Activated T-helper 1 cell treated with anti-CD3 and anti-CD28 coated beads, Interleukin-12 subunit alpha, Interleukin-12 subunit beta, Interleukin-2, Interleukin-4 antibody, amounts not matched to agents 30 ng/mL and 10 ng/mL and 1 ng/mL, durations not matched to agents 14 hours and 24 hours and 36 hours (primary cell): ENCODE measurements at regions of chr6 and their contacts with region 1.

Region 1: GRCh38 chr6:105492706-105493673 is 90.1 kb upstream of the PREP start:
- DNase-seq: no peak
- H3K4me3 Mint-ChIP-seq: peak overlapping the region; percentile 21
- H3K27ac Mint-ChIP-seq: peak overlapping the region; percentile 78
- H3K4me1 Mint-ChIP-seq: peaks cover 26% of the 10 kb centered on the region
- H3K27me3 Mint-ChIP-seq: no peaks in the 10 kb centered on the region

Region 2: DNA sequence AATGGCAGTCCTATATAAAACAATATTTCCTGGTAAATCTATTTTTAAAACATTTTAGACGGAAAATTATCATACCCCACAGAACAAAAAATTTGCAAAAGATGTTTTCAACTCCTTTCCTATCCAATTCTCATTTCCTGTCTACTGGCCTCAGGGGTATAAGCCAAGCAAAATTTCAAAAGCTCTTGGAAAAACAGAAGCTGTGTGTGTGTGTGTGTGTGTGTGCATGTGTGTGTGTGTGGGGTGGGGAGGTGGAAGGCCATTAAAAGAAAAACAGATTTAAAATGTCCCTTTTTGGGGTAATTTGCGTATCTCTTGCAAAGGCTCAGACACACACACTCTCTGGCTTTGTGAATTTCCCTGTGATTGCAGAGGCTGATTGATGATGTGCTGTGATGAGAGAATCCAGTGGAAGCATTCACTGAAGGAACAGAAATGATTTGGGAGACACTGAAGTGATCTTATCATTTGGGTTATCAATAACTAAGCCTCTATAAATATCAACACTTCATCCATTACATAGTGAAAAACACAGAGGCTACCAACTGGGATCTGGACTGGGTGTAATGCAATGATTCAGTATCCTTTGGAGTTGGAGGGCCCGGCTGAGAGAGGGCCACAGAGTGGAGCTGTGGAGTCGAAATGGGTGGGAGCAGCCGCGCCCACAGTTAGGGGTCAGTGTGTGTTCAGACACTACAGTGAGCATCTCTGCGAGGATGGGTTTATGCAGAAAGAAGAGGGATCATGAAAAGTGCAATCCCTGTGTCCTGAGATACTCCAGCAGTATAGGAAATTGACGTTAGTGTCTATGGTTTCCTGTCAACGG is 16.7 kb after region 1 on chr6:
- intact Hi-C with region 1: loop called (anchors 1 kb)
- DNase-seq: no peak
- H3K4me3 Mint-ChIP-seq: no peak overlapping the region
- H3K27ac Mint-ChIP-seq: peak overlapping the region; percentile 1
- H3K4me1 Mint-ChIP-seq: peaks cover 32% of the 10 kb centered on the region
- H3K27me3 Mint-ChIP-seq: peaks cover 27% of the 10 kb centered on the region

Region 3: DNA sequence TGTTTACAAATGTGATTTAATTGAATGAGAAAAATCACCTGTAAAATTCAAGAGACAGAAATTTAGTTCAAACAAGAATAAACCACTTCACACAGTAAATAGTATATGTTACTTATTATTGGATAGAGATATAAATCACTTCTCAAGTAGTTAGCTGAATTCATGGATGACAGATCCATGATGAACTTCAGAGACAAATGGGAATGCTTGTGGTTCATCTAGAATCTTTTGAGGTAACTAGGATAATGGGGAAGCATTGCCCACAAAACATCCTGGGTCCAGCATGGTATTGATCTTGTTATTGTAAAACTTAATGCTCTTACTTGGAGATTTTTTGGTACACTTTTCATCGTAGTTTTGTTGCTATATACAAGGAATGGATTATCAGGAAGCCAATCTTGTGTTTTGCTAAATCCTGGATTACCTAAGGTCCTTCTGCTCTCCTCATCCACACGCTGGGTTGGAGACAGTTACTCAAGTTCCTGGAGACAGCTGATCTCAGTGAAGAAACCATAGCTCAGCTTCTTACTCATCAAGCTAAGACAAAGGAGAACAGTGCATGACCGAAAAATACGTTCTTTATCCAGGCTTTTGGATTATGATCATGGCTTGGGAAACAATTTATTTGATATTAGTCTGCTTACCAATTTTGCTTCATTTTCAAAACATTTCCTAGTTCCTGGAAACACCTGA is 52.4 kb after region 1 on chr6:
- intact Hi-C with region 1: no loop called
- DNase-seq: no peak
- H3K4me3 Mint-ChIP-seq: no peak overlapping the region
- H3K27ac Mint-ChIP-seq: no peak overlapping the region
- H3K4me1 Mint-ChIP-seq: no peaks in the 10 kb centered on the region
- H3K27me3 Mint-ChIP-seq: peaks cover 28% of the 10 kb centered on the region

Region 4: DNA sequence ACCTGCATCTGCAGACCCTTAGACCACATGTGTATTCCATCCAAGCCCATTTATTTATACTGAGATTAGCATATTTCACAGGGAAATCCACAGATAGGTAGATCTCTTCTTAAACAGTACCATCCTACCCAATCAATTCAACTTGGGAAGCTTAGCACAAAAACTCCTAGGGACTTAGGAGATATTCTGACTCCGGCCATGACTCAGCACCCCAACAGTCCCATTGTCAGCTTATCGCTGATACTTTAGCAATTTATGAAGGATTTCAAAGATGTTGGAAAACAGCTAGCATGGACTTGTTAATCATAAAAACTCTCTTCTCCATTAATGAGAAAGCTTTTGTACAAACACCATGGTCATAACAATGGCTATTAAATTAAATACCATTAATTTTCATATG is 146.1 kb after region 1 on chr6:
- intact Hi-C with region 1: no loop called
- DNase-seq: no peak
- H3K4me3 Mint-ChIP-seq: no peak overlapping the region
- H3K27ac Mint-ChIP-seq: no peak overlapping the region
- H3K4me1 Mint-ChIP-seq: peaks cover 47% of the 10 kb centered on the region
- H3K27me3 Mint-ChIP-seq: peaks cover 5% of the 10 kb centered on the region